ENCODE measurements at regions of chr10 and their contacts with region 1.

Region 1: GRCh38 chr10:102503281-102504220 is at the start of gene SUFU:
- DNase-seq: peak; percentile 91 to 99 (median 98)
- ATAC-seq: peak; percentile 85
- H3K4me3 ChIP-seq: peak within 1 kb of the TSS; percentile 92
- H3K4me3 Mint-ChIP-seq: no peak within 1 kb of the TSS
- H3K27ac ChIP-seq: peak within 1 kb of the TSS; percentile 88
- H3K27ac Mint-ChIP-seq: peak within 1 kb of the TSS in 7 of 9 donors; percentile 78 to 95 (median 83)
- H3K4me1 ChIP-seq: peaks cover 19 to 29% of the 10 kb centered on the region in 2 donors
- H3K4me1 Mint-ChIP-seq: peaks cover 22 to 49% (median 41%) of the 10 kb centered on the region in 7 donors
- H3K27me3 ChIP-seq: no peaks in the 10 kb centered on the region
- H3K27me3 Mint-ChIP-seq: no peaks in the 10 kb centered on the region
- total RNA-seq, gene SUFU: 10.7 to 17.5 (median 16.1) TPM

Region 2: DNA sequence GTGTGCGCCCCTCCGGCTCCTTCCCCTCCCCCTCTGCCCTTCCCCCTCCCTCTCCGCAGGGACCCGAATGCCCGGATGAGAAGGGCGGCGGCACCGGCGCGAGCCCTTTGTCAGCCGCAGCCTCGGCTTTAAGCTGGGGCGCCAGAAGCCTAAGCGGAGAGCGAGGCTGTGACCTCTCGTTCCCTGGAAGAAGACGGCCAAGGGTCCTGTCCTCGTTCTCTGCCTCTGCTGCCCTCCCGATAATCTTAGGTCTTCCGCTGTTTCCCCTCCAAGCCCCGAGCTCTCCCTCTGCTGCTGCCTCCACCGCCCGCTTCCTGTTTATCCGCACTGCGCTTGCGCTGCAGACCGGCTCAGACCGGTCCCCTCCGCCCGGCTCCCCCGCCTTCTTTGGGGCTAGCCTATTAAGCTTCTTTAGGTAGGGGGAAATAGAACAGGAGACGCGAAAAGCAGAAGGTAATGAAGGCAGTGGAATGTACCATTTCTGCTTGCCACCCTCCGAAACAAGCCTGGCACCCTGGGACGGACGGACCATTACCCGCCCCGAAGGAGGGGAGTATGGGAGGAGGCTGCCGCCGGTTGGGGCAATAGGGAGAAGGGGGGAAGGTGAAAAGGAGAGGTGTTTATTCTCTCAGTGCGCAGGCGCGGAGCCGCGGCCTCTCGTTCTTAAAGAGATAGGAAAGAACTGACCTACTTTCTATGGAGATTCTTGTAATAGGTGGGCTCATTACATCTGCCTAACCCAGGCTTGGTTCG is 685.3 kb before region 1 on chr10 and contains the start of gene OGA:
- CTCF ChIA-PET with region 1: no interaction called
- POLR2A ChIA-PET with region 1: interaction called, 3 read pairs
- intact Hi-C with region 1: loop called (anchors 1 to 2 kb)
- DNase-seq: peak; percentile 90 to 100 (median 99)
- ATAC-seq: peak; percentile 97
- H3K4me3 ChIP-seq: peak within 1 kb of the TSS; percentile 81
- H3K4me3 Mint-ChIP-seq: peak within 1 kb of the TSS; percentile 95 to 100 (median 97)
- H3K27ac ChIP-seq: peak within 1 kb of the TSS; percentile 82
- H3K27ac Mint-ChIP-seq: peak within 1 kb of the TSS; percentile 95 to 99 (median 98)
- H3K4me1 ChIP-seq: peaks cover 19 to 25% of the 10 kb centered on the region in 2 donors
- H3K4me1 Mint-ChIP-seq: peaks cover 34 to 57% (median 50%) of the 10 kb centered on the region in 7 donors
- H3K27me3 ChIP-seq: no peaks in the 10 kb centered on the region
- H3K27me3 Mint-ChIP-seq: peaks cover 0 to 4% (median 0%) of the 10 kb centered on the region in 5 donors
- total RNA-seq, gene OGA: 154 to 338 (median 321) TPM

Region 3: GRCh38 chr10:102151774-102152544 is 351.6 kb before region 1 on chr10 and contains the start of gene NOLC1:
- CTCF ChIA-PET with region 1: no interaction called
- POLR2A ChIA-PET with region 1: no interaction called
- intact Hi-C with region 1: loop called in 1 of 2 experiments (anchors 1 kb)
- DNase-seq: peak; percentile 95 to 100 (median 100)
- ATAC-seq: peak; percentile 97
- H3K4me3 ChIP-seq: peak within 1 kb of the TSS; percentile 87
- H3K4me3 Mint-ChIP-seq: peak within 1 kb of the TSS; percentile 91 to 98 (median 96)
- H3K27ac ChIP-seq: peak within 1 kb of the TSS; percentile 94
- H3K27ac Mint-ChIP-seq: peak within 1 kb of the TSS; percentile 91 to 98 (median 96)
- H3K4me1 ChIP-seq: peaks cover 11 to 16% of the 10 kb centered on the region in 2 donors
- H3K4me1 Mint-ChIP-seq: peaks cover 28 to 58% (median 43%) of the 10 kb centered on the region in 7 donors
- H3K27me3 ChIP-seq: no peaks in the 10 kb centered on the region
- H3K27me3 Mint-ChIP-seq: peaks cover 0 to 4% (median 0%) of the 10 kb centered on the region in 5 donors
- total RNA-seq, gene NOLC1: 45.1 to 98.5 (median 58.8) TPM

Region 4: DNA sequence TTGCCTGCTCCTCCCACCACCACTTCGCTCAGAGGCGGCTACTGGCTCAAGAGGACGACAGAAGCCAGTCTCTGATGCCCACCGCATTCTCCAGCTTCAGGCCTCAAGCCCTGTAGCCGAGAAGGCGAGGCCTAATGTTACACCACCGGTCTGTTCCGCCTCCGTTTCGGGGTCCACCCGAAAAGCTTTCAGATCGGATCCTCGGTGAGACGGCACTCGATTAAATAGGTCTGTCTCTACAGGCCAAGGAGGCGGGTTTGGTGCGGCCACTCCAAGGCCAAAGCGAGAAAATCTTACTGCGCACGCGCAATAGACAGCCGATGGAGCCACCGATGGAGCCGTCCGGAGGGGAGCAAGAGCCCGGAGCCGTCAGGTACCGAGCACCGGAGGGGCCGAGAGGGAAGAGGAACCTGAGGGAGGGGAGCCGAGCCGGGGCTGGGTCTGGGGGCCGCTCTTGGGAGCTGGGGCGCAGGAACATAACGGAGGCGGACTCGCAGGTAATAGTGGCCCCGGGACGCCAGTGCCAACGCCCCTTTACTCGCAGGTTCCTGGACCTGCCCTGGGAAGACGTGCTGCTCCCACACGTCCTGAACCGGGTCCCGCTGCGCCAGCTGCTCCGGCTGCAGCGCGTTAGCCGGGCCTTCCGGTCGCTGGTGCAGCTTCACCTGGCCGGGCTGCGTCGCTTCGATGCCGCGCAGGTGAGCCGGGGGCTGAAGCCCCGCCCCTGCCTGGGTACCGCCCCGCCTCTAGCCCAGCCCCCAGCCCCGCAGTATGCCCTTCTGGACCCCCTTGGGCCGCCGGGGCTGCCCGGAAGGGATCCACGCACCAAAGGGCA is 82.5 kb before region 1 on chr10 and contains the start of gene FBXL15:
- CTCF ChIA-PET with region 1: interaction called, 4 read pairs
- POLR2A ChIA-PET with region 1: interaction called, 8 read pairs
- intact Hi-C with region 1: loop called (anchors 1 kb)
- DNase-seq: peak; percentile 82 to 96 (median 90)
- ATAC-seq: peak; percentile 86
- H3K4me3 ChIP-seq: peak within 1 kb of the TSS; percentile 93
- H3K4me3 Mint-ChIP-seq: peak within 1 kb of the TSS; percentile 94 to 99 (median 98)
- H3K27ac ChIP-seq: peak within 1 kb of the TSS; percentile 75
- H3K27ac Mint-ChIP-seq: peak within 1 kb of the TSS; percentile 91 to 97 (median 95)
- H3K4me1 ChIP-seq: peaks cover 26 to 33% of the 10 kb centered on the region in 2 donors
- H3K4me1 Mint-ChIP-seq: peaks cover 17 to 46% (median 38%) of the 10 kb centered on the region in 7 donors
- H3K27me3 ChIP-seq: no peaks in the 10 kb centered on the region
- H3K27me3 Mint-ChIP-seq: peaks cover 17 to 26% (median 19%) of the 10 kb centered on the region in 5 donors
- total RNA-seq, gene FBXL15: 10.8 to 21.0 (median 14.1) TPM

Region 5: DNA sequence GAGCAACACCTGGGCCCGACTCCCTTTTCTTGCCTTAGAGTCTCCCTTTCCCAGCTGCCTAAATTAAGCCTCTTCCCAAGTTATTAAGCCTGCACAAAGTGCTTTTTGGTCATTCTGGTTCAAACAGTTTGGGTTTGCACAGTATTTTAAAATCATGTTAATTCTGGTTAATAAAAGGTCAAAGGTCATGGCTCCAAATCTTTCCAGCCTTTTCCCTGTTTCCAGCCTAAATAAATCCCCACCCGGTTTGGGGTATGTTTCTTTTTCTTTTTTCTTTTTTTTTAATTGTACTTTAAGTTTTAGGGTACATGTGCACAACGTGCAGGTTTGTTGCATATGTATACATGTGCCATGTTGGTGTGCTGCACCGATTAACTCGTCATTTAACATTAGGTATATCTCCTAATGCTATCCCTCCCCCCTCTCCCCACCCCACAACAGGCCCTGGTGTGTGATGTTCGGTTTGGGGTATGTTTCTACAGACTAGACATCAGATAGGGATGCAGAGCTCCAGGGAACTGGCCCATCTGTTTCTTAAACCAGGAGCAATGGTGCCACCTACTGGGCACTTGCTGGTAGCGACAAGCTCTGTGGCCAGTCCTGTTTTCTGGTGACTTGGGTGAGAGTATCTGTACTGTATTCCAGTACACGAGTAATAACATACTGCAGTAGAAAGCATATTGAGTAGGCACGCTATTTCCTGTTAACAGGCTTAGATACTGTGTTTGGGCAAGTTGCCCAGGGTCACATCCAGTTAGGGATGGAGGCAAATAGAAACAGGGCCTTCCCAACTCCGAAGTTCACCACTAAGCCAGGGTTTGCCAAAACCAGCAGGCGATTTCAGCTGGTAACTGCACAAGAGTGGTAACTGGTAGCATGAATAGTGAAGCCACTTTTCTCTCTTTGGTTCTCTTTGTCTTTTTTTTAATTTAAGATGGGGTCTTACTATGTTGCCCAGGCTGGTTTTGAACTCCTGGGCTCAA is 80.2 kb after region 1 on chr10:
- CTCF ChIA-PET with region 1: interaction called, 32 read pairs
- POLR2A ChIA-PET with region 1: interaction called, 8 read pairs
- intact Hi-C with region 1: loop called (anchors 1 kb)
- DNase-seq: peak; percentile 57 to 79 (median 76)
- ATAC-seq: peak; percentile 97
- H3K4me3 ChIP-seq: no peak overlapping the region
- H3K4me3 Mint-ChIP-seq: no peak overlapping the region
- H3K27ac ChIP-seq: no peak overlapping the region
- H3K27ac Mint-ChIP-seq: peak overlapping the region in 5 of 9 donors; percentile 14 to 76 (median 47)
- H3K4me1 ChIP-seq: no peaks in the 10 kb centered on the region
- H3K4me1 Mint-ChIP-seq: peaks cover 6 to 21% (median 16%) of the 10 kb centered on the region in 7 donors
- H3K27me3 ChIP-seq: no peaks in the 10 kb centered on the region
- H3K27me3 Mint-ChIP-seq: no peaks in the 10 kb centered on the region

Region 6: GRCh38 chr10:102853944-102854694 is 350.6 kb after region 1 on chr10 and contains the start of gene BORCS7:
- CTCF ChIA-PET with region 1: no interaction called
- POLR2A ChIA-PET with region 1: interaction called, 3 read pairs
- intact Hi-C with region 1: loop called in 1 of 2 experiments (anchors 1 kb)
- DNase-seq: peak; percentile 69 to 91 (median 88)
- ATAC-seq: peak; percentile 100
- H3K4me3 ChIP-seq: peak within 1 kb of the TSS; percentile 100
- H3K4me3 Mint-ChIP-seq: peak within 1 kb of the TSS; percentile 84 to 99 (median 91)
- H3K27ac ChIP-seq: peak within 1 kb of the TSS; percentile 95
- H3K27ac Mint-ChIP-seq: peak within 1 kb of the TSS; percentile 96 to 99 (median 99)
- H3K4me1 ChIP-seq: no peaks in the 10 kb centered on the region
- H3K4me1 Mint-ChIP-seq: peaks cover 7 to 25% (median 15%) of the 10 kb centered on the region in 7 donors
- H3K27me3 ChIP-seq: no peaks in the 10 kb centered on the region
- H3K27me3 Mint-ChIP-seq: no peaks in the 10 kb centered on the region
- total RNA-seq, gene BORCS7: 11.6 to 20.2 (median 13.3) TPM

Region 7: GRCh38 chr10:103353281-103353680 is 849.7 kb after region 1 on chr10:
- CTCF ChIA-PET with region 1: no interaction called
- POLR2A ChIA-PET with region 1: no interaction called
- intact Hi-C with region 1: no loop called
- DNase-seq: no peak
- ATAC-seq: no peak
- H3K4me3 ChIP-seq: no peak overlapping the region
- H3K4me3 Mint-ChIP-seq: no peak overlapping the region
- H3K27ac ChIP-seq: no peak overlapping the region
- H3K27ac Mint-ChIP-seq: no peak overlapping the region
- H3K4me1 ChIP-seq: peaks cover 6 to 11% of the 10 kb centered on the region in 2 donors
- H3K4me1 Mint-ChIP-seq: peaks cover 0 to 14% (median 9%) of the 10 kb centered on the region in 7 donors
- H3K27me3 ChIP-seq: no peaks in the 10 kb centered on the region
- H3K27me3 Mint-ChIP-seq: no peaks in the 10 kb centered on the region

Measured in naive thymus-derived CD4-positive, alpha-beta T cell (primary cell).